ENCODE measurements at regions of chr22 and their contacts with region 1.

Region 1: DNA sequence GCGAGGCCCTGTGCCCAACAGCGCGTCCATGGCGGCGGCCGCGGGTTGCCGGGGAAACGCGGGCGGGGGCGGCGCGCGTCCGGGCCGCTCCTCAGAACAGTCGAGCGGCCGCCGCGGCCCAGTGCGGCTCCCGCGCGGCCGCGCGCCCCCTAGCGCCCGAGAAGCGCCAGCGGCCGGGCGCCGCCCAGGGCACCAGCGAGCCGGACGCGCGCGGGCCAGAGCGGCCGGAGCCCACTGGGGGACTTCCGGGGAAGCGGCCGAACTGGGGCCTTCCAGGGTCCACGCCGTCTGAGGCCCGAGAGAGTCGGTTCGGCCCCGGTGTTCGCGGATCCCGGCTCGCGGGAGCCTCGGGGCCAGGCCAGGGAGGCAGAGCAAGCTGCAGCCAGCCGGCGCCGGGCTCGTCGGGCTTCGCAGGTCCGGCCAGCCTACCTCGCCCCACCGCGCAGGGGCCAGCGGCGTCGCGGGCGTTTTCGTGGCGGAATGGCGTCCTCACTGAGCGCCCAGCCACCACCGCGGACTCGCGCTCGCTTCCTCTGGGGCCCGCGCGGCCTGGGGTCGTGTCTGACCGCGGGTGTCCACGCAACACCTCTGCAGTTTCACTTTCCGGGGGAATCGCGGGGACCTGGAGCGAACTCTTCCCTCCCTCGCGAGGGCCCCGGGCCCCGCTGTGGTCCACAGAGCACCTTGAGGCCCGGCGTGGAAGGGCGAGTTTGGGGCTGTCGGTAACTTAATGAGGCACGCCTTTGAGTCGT is at the start of gene DENND6B:
- DNase-seq: peak; percentile 74
- ATAC-seq: peak; percentile 94
- H3K4me3 Mint-ChIP-seq: peak within 1 kb of the TSS; percentile 77
- H3K27ac Mint-ChIP-seq: peak within 1 kb of the TSS; percentile 72
- H3K4me1 Mint-ChIP-seq: peaks cover 15% of the 10 kb centered on the region
- H3K27me3 Mint-ChIP-seq: peaks cover 10% of the 10 kb centered on the region
- CTCF ChIP-seq: peak; percentile 47
- total RNA-seq, gene DENND6B: 4.6 to 5.3 TPM

Region 2: DNA sequence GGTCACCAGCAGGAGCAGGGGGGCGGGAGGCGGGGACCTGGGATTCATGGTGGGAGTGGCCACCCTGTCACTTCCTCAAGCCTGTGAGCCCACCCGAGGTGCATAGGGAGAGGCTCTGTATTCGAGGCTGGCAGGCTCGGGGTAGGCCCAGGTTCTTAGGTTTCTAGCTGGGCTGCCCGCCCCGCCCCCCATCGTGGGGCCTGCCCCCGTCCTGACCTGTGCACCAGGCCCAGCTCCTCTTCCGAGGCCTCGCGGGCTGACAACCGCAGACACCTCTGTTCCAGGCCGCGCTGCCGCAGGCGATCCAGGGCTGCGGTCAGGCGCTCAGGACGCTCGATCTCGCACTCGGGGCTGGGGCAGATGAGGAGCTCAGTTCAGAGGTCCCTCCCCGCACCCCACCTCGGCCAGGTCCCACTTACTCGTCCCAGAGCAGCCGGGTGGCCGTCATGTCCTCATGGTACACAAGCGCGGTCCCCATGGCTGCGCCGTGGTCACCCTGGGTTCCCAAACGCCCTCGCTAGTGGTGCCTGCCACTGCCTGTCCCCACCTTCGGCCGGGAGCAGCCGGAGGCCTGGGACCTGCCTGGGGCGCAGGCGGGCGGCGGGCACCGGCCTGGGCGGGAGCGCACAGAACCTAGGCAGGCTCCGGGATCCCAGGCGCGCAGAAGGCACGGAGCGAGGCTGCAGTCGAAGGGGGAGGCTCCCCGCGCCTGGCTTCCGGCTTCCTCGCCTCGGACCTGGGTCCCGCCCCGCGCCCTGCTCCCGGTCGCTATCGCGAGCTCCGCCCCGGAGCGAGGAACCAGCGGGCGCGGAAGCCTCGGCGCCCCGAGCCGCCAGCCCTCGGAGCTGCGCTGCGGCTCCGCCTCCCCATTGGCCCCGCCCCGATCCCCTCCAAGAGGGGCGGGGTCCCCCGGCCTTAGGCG is 76.3 kb before region 1 on chr22 and contains the start of gene HDAC10:
- CTCF ChIA-PET with region 1: interaction called, 15 read pairs
- POLR2A ChIA-PET with region 1: no interaction called
- intact Hi-C with region 1: no loop called
- DNase-seq: peak; percentile 90
- ATAC-seq: peak; percentile 89
- H3K4me3 Mint-ChIP-seq: peak within 1 kb of the TSS; percentile 85
- H3K27ac Mint-ChIP-seq: peak within 1 kb of the TSS; percentile 81
- H3K4me1 Mint-ChIP-seq: peaks cover 15% of the 10 kb centered on the region
- H3K27me3 Mint-ChIP-seq: no peaks in the 10 kb centered on the region
- CTCF ChIP-seq: no peak
- total RNA-seq, gene HDAC10: 43.0 to 44.3 TPM

Region 3: GRCh38 chr22:50276143-50276542 is 51.0 kb before region 1 on chr22:
- CTCF ChIA-PET with region 1: interaction called, 44 read pairs
- POLR2A ChIA-PET with region 1: interaction called, 4 read pairs
- intact Hi-C with region 1: loop called (anchors 5 kb)
- DNase-seq: peak; percentile 67
- ATAC-seq: peak; percentile 80
- H3K4me3 Mint-ChIP-seq: no peak overlapping the region
- H3K27ac Mint-ChIP-seq: no peak overlapping the region
- H3K4me1 Mint-ChIP-seq: peaks cover 1% of the 10 kb centered on the region
- H3K27me3 Mint-ChIP-seq: peaks cover 8% of the 10 kb centered on the region
- CTCF ChIP-seq: peak; percentile 70

Region 4: GRCh38 chr22:50293441-50294318 is 33.5 kb before region 1 on chr22:
- CTCF ChIA-PET with region 1: interaction called, 14 read pairs
- POLR2A ChIA-PET with region 1: interaction called, 4 read pairs
- intact Hi-C with region 1: no loop called
- DNase-seq: peak; percentile 53
- ATAC-seq: peak; percentile 62
- H3K4me3 Mint-ChIP-seq: peak overlapping the region; percentile 74
- H3K27ac Mint-ChIP-seq: peak overlapping the region; percentile 42
- H3K4me1 Mint-ChIP-seq: peaks cover 10% of the 10 kb centered on the region
- H3K27me3 Mint-ChIP-seq: peaks cover 9% of the 10 kb centered on the region
- CTCF ChIP-seq: no peak

Region 5: GRCh38 chr22:50314455-50315288 is 12.5 kb before region 1 on chr22:
- CTCF ChIA-PET with region 1: interaction called, 19 read pairs
- POLR2A ChIA-PET with region 1: interaction called, 8 read pairs
- intact Hi-C with region 1: no loop called
- DNase-seq: peak; percentile 91
- ATAC-seq: peak; percentile 97
- H3K4me3 Mint-ChIP-seq: peak overlapping the region; percentile 84
- H3K27ac Mint-ChIP-seq: peak overlapping the region; percentile 91
- H3K4me1 Mint-ChIP-seq: peaks cover 8% of the 10 kb centered on the region
- H3K27me3 Mint-ChIP-seq: no peaks in the 10 kb centered on the region
- CTCF ChIP-seq: no peak

Region 6: GRCh38 chr22:50341977-50342650 is 15.0 kb after region 1 on chr22:
- CTCF ChIA-PET with region 1: interaction called, 37 read pairs
- POLR2A ChIA-PET with region 1: interaction called, 3 read pairs
- intact Hi-C with region 1: no loop called
- DNase-seq: peak; percentile 94
- ATAC-seq: peak; percentile 58
- H3K4me3 Mint-ChIP-seq: peak overlapping the region; percentile 75
- H3K27ac Mint-ChIP-seq: peak overlapping the region; percentile 86
- H3K4me1 Mint-ChIP-seq: peaks cover 13% of the 10 kb centered on the region
- H3K27me3 Mint-ChIP-seq: no peaks in the 10 kb centered on the region
- CTCF ChIP-seq: peak; percentile 96